CD4-positive, alpha-beta memory T cell (primary cell): ENCODE measurements at regions of chr17 and their contacts with region 1.

Region 1: GRCh38 chr17:49180303-49180702 is 30.1 kb downstream of the GNGT2 start:
- DNase-seq: peak; percentile 44 to 59 (median 56)
- H3K4me3 ChIP-seq: no peak overlapping the region
- H3K4me3 Mint-ChIP-seq: peak overlapping the region in 2 of 8 donors; percentile 13 to 50
- H3K27ac ChIP-seq: no peak overlapping the region
- H3K27ac Mint-ChIP-seq: peak overlapping the region in 1 of 7 donors; percentile 54
- H3K4me1 ChIP-seq: peaks cover 4% of the 10 kb centered on the region
- H3K4me1 Mint-ChIP-seq: peaks cover 0 to 3% (median 2%) of the 10 kb centered on the region in 4 donors
- H3K27me3 ChIP-seq: no peaks in the 10 kb centered on the region
- H3K27me3 Mint-ChIP-seq: peaks cover 4% of the 10 kb centered on the region in 2 donors

Region 2: DNA sequence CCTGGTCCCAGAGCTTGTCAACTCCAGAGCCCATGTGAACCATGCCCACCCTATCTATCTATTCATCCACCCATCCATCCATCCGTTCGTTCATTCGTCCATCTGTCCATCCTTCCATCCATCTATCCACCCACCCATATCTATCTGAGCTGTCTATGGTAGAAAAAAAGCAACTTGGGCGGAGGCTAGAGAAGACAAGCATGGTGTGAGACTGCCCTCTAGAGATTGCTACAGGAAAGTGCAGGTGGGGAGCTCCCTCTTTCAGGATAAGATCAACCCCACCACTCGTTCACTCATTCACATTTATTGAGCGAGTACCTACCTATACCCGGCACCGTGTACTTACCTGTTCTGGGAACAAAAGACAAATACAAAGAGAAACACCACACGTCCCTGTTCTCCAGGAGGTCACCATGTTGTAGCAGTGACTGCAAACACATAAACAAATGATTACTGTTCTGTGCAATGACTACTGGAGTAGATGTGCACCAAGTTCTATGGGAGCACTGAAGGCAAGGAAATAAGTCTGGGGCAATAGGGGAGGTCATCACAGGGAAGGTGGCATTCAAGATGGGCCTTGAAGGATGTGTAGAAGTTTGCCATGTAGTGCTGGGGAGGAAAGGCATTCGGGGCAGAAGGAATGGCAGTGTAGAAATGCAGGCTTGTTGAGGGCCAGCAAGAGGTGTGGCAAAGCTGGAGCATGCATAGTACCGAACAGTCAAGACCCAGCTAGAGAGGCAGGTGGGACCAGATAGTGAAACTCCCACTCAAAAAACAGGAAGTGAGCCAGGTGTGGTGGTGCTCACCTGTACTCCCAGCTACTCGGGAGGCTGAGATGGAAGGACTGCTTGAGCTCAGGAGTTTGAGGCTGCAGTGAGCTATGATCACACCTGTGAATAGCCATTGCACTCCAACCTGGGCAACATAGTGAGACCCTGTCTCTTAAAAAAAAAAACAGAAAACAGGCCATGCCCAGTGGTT is 301.1 kb before region 1 on chr17:
- CTCF ChIA-PET with region 1: no interaction called
- POLR2A ChIA-PET with region 1: no interaction called
- intact Hi-C with region 1: no loop called
- DNase-seq: peak; percentile 67 to 71 (median 70)
- H3K4me3 ChIP-seq: no peak overlapping the region
- H3K4me3 Mint-ChIP-seq: no peak overlapping the region
- H3K27ac ChIP-seq: no peak overlapping the region
- H3K27ac Mint-ChIP-seq: no peak overlapping the region
- H3K4me1 ChIP-seq: no peaks in the 10 kb centered on the region
- H3K4me1 Mint-ChIP-seq: peaks cover 0 to 7% (median 2%) of the 10 kb centered on the region in 4 donors
- H3K27me3 ChIP-seq: no peaks in the 10 kb centered on the region
- H3K27me3 Mint-ChIP-seq: peaks cover 0 to 7% of the 10 kb centered on the region in 2 donors

Region 3: GRCh38 chr17:49076573-49077384 is 103.5 kb before region 1 on chr17:
- CTCF ChIA-PET with region 1: no interaction called
- POLR2A ChIA-PET with region 1: no interaction called
- intact Hi-C with region 1: no loop called
- DNase-seq: no peak
- H3K4me3 ChIP-seq: no peak overlapping the region
- H3K4me3 Mint-ChIP-seq: no peak overlapping the region
- H3K27ac ChIP-seq: no peak overlapping the region
- H3K27ac Mint-ChIP-seq: no peak overlapping the region
- H3K4me1 ChIP-seq: no peaks in the 10 kb centered on the region
- H3K4me1 Mint-ChIP-seq: no peaks in the 10 kb centered on the region
- H3K27me3 ChIP-seq: no peaks in the 10 kb centered on the region
- H3K27me3 Mint-ChIP-seq: peaks cover 29 to 34% of the 10 kb centered on the region in 2 donors

Region 4: GRCh38 chr17:49132699-49133364 is 47.5 kb before region 1 on chr17 and contains the start of gene B4GALNT2:
- CTCF ChIA-PET with region 1: no interaction called
- POLR2A ChIA-PET with region 1: no interaction called
- intact Hi-C with region 1: no loop called
- DNase-seq: peak in 2 of 5 donors; percentile 6
- H3K4me3 ChIP-seq: no peak within 1 kb of the TSS
- H3K4me3 Mint-ChIP-seq: peak within 1 kb of the TSS; percentile 62 to 80 (median 71)
- H3K27ac ChIP-seq: no peak within 1 kb of the TSS
- H3K27ac Mint-ChIP-seq: no peak within 1 kb of the TSS
- H3K4me1 ChIP-seq: peaks cover 11% of the 10 kb centered on the region
- H3K4me1 Mint-ChIP-seq: peaks cover 3 to 14% (median 8%) of the 10 kb centered on the region in 4 donors
- H3K27me3 ChIP-seq: peaks cover 17% of the 10 kb centered on the region
- H3K27me3 Mint-ChIP-seq: peaks cover 36 to 44% of the 10 kb centered on the region in 2 donors
- total RNA-seq, gene B4GALNT2: 0.06 TPM

Region 5: GRCh38 chr17:49170216-49170615 is 10.1 kb before region 1 on chr17:
- CTCF ChIA-PET with region 1: interaction called, 15 read pairs
- POLR2A ChIA-PET with region 1: no interaction called
- intact Hi-C with region 1: no loop called
- DNase-seq: no peak
- H3K4me3 ChIP-seq: no peak overlapping the region
- H3K4me3 Mint-ChIP-seq: no peak overlapping the region
- H3K27ac ChIP-seq: no peak overlapping the region
- H3K27ac Mint-ChIP-seq: no peak overlapping the region
- H3K4me1 ChIP-seq: no peaks in the 10 kb centered on the region
- H3K4me1 Mint-ChIP-seq: no peaks in the 10 kb centered on the region
- H3K27me3 ChIP-seq: peaks cover 11% of the 10 kb centered on the region
- H3K27me3 Mint-ChIP-seq: peaks cover 50 to 62% of the 10 kb centered on the region in 2 donors

Region 6: DNA sequence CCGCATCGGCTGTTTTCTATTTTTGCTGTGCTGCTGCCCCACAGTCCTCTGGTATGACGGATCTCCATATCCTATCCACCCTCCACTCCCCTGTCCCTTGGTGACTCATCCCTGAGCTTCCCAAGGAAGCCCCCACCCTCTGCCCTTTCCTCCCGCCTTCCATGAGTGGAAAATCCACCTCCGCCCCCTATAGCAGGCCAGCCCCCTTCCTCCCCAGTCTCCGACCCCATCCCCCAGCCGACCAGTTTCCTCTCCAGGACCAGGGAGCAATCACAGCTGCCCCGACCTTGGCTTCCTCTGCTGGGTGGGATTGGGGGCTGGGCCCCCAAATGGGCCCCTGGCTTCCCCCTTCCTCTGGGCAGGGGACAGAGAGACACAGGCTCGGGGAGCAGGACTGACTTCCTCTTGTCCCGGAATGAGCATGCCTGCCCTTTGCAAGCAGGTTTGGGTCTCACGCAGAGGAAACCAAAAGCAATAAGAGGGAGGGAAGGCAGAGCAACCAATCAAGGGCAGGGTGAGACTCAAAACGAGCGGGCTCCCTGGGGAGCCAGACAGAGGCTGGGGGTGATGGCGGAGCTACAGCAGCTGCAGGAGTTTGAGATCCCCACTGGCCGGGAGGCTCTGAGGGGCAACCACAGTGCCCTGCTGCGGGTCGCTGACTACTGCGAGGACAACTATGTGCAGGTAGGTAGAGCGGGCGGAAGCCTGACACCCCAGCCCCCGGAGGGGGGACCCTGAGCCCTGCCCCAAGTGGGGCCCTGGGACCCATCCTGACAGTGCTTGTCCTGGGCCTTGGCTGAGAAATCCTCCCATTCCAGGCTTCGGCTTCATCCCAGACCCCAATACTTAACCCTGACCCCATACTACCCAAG is 30.1 kb after region 1 on chr17 and contains the starts of genes ABI3 and GNGT2:
- CTCF ChIA-PET with region 1: interaction called, 12 read pairs
- POLR2A ChIA-PET with region 1: no interaction called
- intact Hi-C with region 1: no loop called
- DNase-seq: peak; percentile 58 to 71 (median 68)
- H3K4me3 ChIP-seq: peak within 1 kb of the TSS; percentile 77 to 89
- H3K4me3 Mint-ChIP-seq: peak within 1 kb of the TSS; percentile 92 to 98 (median 96)
- H3K27ac ChIP-seq: peak within 1 kb of the TSS; percentile 65
- H3K27ac Mint-ChIP-seq: peak within 1 kb of the TSS; percentile 56 to 95 (median 91)
- H3K4me1 ChIP-seq: peaks cover 71% of the 10 kb centered on the region
- H3K4me1 Mint-ChIP-seq: peaks cover 47 to 72% (median 62%) of the 10 kb centered on the region in 4 donors
- H3K27me3 ChIP-seq: no peaks in the 10 kb centered on the region
- H3K27me3 Mint-ChIP-seq: no peaks in the 10 kb centered on the region
- total RNA-seq, gene ABI3: 9.5 to 11.5 TPM
- total RNA-seq, gene GNGT2: 2.9 to 3.3 TPM

Region 7: GRCh38 chr17:49223517-49224197 is 43.4 kb after region 1 on chr17:
- CTCF ChIA-PET with region 1: interaction called, 315 read pairs
- POLR2A ChIA-PET with region 1: interaction called, 11 read pairs
- intact Hi-C with region 1: loop called (anchors 1 kb)
- DNase-seq: peak; percentile 42 to 55 (median 51)
- H3K4me3 ChIP-seq: peak overlapping the region in 1 of 2 donors; percentile 50
- H3K4me3 Mint-ChIP-seq: peak overlapping the region; percentile 75 to 89 (median 83)
- H3K27ac ChIP-seq: no peak overlapping the region
- H3K27ac Mint-ChIP-seq: peak overlapping the region in 5 of 7 donors; percentile 38 to 80 (median 57)
- H3K4me1 ChIP-seq: peaks cover 45% of the 10 kb centered on the region
- H3K4me1 Mint-ChIP-seq: peaks cover 19 to 50% (median 29%) of the 10 kb centered on the region in 4 donors
- H3K27me3 ChIP-seq: no peaks in the 10 kb centered on the region
- H3K27me3 Mint-ChIP-seq: peaks cover 3 to 7% of the 10 kb centered on the region in 2 donors

Region 8: GRCh38 chr17:49290690-49291359 is 110.5 kb after region 1 on chr17:
- CTCF ChIA-PET with region 1: interaction called, 22 read pairs
- POLR2A ChIA-PET with region 1: no interaction called
- intact Hi-C with region 1: loop called (anchors 1 kb)
- DNase-seq: peak in 2 of 5 donors; percentile 4 to 12
- H3K4me3 ChIP-seq: no peak overlapping the region
- H3K4me3 Mint-ChIP-seq: no peak overlapping the region
- H3K27ac ChIP-seq: no peak overlapping the region
- H3K27ac Mint-ChIP-seq: peak overlapping the region in 1 of 7 donors; percentile 59
- H3K4me1 ChIP-seq: no peaks in the 10 kb centered on the region
- H3K4me1 Mint-ChIP-seq: peaks cover 0 to 4% (median 3%) of the 10 kb centered on the region in 4 donors
- H3K27me3 ChIP-seq: no peaks in the 10 kb centered on the region
- H3K27me3 Mint-ChIP-seq: no peaks in the 10 kb centered on the region